Endothelial cell of umbilical vein (primary cell): ENCODE measurements at regions of chr12 and their contacts with region 1.

Region 1: GRCh38 chr12:27573972-27574371 is 50.0 kb downstream of the PPFIBP1 start:
- DNase-seq: peak; percentile 92
- H3K4me3 ChIP-seq: no peak overlapping the region
- H3K27ac ChIP-seq: peak overlapping the region; percentile 92
- H3K4me1 ChIP-seq: peaks cover 76% of the 10 kb centered on the region
- H3K27me3 ChIP-seq: no peaks in the 10 kb centered on the region
- CTCF ChIP-seq: no peak
- POLR2A ChIP-seq: no peak

Region 2: DNA sequence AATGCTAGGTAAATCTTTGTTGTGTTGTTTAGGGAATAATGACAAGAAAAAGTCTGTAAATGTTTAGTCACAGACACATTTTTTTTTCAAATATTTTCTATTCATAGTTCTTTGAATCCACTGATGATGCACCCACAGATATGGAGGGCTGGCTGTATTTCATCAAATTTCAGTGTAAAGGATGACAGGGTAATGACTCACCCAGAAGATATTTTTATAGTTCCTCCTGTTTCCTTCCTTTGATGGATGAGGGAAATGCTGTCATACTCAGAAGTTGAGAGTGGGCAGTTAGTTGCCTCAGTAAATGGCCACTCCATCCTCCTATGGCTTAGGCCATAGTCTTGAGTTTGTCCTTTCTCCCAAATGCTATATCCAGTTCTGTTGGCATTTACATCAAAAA is 45.3 kb after region 1 on chr12:
- CTCF ChIA-PET with region 1: no interaction called
- POLR2A ChIA-PET with region 1: no interaction called
- dilution Hi-C with region 1: no loop called
- intact Hi-C with region 1: loop called (anchors 2 kb)
- DNase-seq: peak; percentile 87
- H3K4me3 ChIP-seq: no peak overlapping the region
- H3K27ac ChIP-seq: peak overlapping the region; percentile 71
- H3K4me1 ChIP-seq: peaks cover 76% of the 10 kb centered on the region
- H3K27me3 ChIP-seq: no peaks in the 10 kb centered on the region
- CTCF ChIP-seq: no peak
- POLR2A ChIP-seq: peak; percentile 51

Region 3: GRCh38 chr12:27635349-27635972 is 61.5 kb after region 1 on chr12:
- CTCF ChIA-PET with region 1: no interaction called
- POLR2A ChIA-PET with region 1: no interaction called
- dilution Hi-C with region 1: no loop called
- intact Hi-C with region 1: loop called (anchors 2 kb)
- DNase-seq: peak; percentile 61
- H3K4me3 ChIP-seq: no peak overlapping the region
- H3K27ac ChIP-seq: no peak overlapping the region
- H3K4me1 ChIP-seq: peaks cover 19% of the 10 kb centered on the region
- H3K27me3 ChIP-seq: no peaks in the 10 kb centered on the region
- CTCF ChIP-seq: peak; percentile 28 to 39
- POLR2A ChIP-seq: no peak